ENCODE measurements at regions of chr7 and their contacts with region 1.

Region 1: DNA sequence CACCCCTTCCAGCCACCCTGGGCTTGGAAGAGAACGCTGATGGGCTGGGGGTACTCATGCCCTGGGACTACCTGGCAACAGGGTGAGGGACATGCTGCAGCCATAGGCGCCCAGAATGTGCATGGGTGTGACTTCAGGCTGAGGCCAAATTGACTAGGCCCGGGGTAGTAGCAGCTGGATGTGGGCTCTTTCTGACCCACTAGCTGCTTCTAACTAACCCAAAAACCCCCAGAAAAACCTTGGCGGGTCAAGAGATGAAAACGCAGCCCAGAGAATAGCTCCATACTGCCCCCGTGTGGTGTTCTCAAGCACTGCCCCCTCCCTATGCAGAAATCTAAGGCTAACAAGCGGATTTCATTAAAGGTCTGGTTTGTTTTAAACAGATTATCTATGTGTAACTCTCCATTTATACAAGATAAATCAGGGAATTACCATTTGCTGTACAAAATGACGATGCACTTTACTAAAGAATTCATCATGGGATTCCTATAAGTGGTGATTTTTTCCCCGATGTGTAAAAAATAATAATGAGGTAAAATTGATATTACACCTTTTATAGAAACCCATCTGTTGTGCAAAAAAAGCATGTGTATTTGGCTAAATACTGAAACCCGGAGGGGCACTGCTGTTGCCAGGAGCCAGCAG is 4.2 kb downstream of the SMARCD3 start:
- DNase-seq: peak; percentile 72
- H3K4me3 Mint-ChIP-seq: no peak overlapping the region
- H3K27ac Mint-ChIP-seq: no peak overlapping the region
- H3K4me1 Mint-ChIP-seq: peaks cover 34% of the 10 kb centered on the region
- H3K27me3 Mint-ChIP-seq: peaks cover 39% of the 10 kb centered on the region

Region 2: DNA sequence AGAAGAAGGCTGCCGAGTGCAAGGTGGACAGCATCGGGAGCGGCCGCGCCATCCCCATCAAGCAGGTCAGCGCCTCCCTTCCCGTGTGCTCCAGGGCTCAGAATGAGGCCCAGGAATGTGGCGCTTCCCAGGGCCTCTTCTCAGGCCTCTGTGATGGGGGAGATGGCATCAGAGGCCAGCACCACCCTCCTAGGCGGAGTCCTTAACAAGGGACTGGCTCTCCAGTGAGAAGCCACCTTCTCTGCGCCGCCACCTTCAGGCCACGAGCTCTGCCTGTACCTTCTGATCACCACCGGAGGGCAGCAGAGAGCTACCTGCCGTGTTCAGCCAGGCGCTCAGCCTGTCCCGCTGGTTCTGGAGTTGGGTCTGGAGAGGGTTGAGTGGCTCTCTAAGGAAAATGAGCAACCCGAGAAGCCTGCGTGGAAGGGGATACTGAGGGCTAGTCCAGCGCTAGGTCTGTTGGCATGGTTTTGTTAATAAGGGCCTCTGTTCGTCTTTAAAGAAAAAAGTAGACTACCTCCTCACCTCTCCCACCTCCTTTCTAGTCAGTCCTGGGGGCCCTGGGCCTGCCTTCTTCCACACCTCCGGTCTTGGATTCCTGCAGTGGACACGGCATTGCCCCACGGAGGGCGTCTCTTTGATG is 120.4 kb before region 1 on chr7:
- CTCF ChIA-PET with region 1: interaction called, 29 read pairs
- POLR2A ChIA-PET with region 1: interaction called, 4 read pairs
- DNase-seq: peak; percentile 84
- H3K4me3 Mint-ChIP-seq: no peak overlapping the region
- H3K27ac Mint-ChIP-seq: no peak overlapping the region
- H3K4me1 Mint-ChIP-seq: peaks cover 3% of the 10 kb centered on the region
- H3K27me3 Mint-ChIP-seq: no peaks in the 10 kb centered on the region

Region 3: DNA sequence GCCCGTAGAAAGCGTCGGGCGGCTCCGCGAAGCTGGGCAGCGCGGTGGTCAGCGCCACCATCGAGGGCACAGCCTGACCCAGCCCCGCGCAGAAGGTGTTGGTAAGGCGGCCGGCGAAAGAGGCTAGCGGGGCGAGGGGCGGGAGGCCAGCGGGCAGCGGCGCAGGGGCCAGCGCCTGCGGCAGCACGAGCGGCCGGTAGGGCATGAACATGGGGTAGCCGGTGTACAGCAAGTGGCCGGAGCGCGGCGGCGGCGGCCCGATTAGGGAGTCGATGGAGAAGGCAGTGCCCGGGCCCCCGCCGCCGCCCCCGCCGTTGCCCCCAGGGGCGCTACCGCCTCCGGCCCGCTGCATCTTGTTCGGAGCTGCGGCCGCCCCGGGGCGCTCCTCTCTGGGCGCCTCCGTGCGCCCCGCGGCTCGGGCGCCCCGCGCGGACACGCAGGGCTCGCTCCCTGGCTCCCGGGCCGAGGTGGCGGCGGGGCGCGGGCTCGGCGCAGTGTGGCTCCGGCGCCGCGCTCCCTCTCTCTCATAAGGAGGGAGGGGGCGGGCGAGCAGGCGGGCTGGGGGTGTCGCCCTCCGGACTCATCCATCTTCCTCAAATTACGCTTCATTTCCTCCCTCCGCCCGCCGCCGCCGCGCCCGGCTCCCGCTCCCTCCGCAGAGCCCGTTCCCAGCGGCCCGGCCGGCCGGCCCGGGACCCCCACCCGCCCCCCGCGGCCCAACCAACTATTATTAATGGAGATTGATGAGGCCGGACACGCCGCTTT is 76.9 kb before region 1 on chr7 and contains the start of gene GBX1:
- CTCF ChIA-PET with region 1: interaction called, 11 read pairs
- POLR2A ChIA-PET with region 1: no interaction called
- DNase-seq: no peak
- H3K4me3 Mint-ChIP-seq: peak within 1 kb of the TSS; percentile 53
- H3K27ac Mint-ChIP-seq: no peak within 1 kb of the TSS
- H3K4me1 Mint-ChIP-seq: peaks cover 7% of the 10 kb centered on the region
- H3K27me3 Mint-ChIP-seq: peaks cover 36% of the 10 kb centered on the region
- total RNA-seq, gene GBX1: not detected

Region 4: DNA sequence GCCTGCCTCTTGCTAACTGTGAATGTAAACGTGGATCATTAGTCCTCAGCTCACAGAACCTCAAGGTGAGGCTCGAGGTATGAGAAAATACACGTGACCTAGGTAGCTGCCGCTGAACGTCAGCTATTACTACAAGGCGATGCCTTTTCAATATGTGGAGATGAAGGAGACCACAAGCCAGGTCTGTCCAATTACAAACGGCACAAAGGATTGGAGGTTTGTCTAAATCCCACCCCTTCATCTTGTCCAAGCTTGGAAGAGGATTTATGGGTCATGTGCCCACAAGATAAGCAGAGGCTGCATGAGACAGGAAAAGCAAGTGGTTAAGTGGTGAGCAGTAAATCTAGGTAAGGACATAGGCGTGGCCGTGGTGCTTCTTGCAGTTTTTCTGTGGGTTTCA is 37.4 kb before region 1 on chr7:
- CTCF ChIA-PET with region 1: interaction called, 22 read pairs
- POLR2A ChIA-PET with region 1: interaction called, 3 read pairs
- DNase-seq: peak; percentile 52
- H3K4me3 Mint-ChIP-seq: no peak overlapping the region
- H3K27ac Mint-ChIP-seq: peak overlapping the region; percentile 74
- H3K4me1 Mint-ChIP-seq: peaks cover 27% of the 10 kb centered on the region
- H3K27me3 Mint-ChIP-seq: peaks cover 4% of the 10 kb centered on the region

Region 5: DNA sequence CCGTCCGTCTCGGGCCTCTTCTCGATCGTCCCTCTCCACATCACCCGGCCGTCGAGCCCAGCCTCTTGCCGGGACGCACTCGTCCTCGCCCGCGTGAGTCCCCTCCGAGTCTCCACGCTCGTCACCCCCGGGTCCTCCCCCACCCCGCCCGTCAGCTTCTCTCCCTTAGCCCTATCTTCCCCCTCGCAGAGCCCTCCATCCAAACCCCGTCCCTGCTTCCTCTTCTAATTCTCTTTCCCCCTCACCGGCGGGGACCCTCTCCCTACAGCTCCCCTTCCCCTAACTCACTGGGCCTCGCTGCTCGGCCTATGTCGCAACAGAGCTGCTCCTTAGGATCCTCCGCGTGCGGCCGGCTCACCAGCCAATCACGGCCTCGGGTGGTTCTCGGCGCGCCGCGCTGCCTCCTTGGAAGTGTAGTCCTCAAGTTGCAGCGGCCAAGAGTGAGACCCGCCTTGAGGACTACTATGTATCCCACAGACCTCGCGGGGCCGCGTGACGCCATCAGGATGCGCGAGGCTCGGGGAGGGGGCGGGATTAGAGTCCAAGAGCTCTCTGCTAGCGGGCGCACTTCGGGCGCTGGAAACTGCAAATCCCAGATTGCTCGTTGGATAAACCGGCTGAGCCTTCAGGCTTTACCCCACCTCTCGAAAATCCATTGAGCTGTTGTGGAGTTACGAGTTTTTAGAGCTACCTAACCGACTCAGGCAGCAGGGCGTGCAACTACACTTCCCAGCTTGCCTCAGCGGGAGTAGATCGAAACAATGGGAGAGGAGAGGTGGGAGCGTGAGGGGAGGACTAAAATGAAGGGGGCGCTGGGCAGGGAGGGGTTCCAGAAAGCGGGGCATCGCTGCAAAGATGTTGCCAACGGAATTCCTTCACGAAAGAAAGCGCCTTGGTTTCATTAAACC is 17.2 kb before region 1 on chr7 and contains the start of gene ABCF2:
- CTCF ChIA-PET with region 1: interaction called, 47 read pairs
- POLR2A ChIA-PET with region 1: interaction called, 38 read pairs
- DNase-seq: peak; percentile 99
- H3K4me3 Mint-ChIP-seq: peak within 1 kb of the TSS; percentile 98
- H3K27ac Mint-ChIP-seq: peak within 1 kb of the TSS; percentile 83
- H3K4me1 Mint-ChIP-seq: peaks cover 46% of the 10 kb centered on the region
- H3K27me3 Mint-ChIP-seq: no peaks in the 10 kb centered on the region
- total RNA-seq, gene ABCF2: 23.1 to 27.6 TPM

Region 6: GRCh38 chr7:151232091-151232916 is 12.0 kb before region 1 on chr7 and contains the start of gene CHPF2:
- CTCF ChIA-PET with region 1: interaction called, 47 read pairs
- POLR2A ChIA-PET with region 1: interaction called, 38 read pairs
- DNase-seq: peak; percentile 95
- H3K4me3 Mint-ChIP-seq: peak within 1 kb of the TSS; percentile 99
- H3K27ac Mint-ChIP-seq: peak within 1 kb of the TSS; percentile 99
- H3K4me1 Mint-ChIP-seq: peaks cover 47% of the 10 kb centered on the region
- H3K27me3 Mint-ChIP-seq: no peaks in the 10 kb centered on the region
- total RNA-seq, gene CHPF2: 56.0 to 56.4 TPM

Region 7: GRCh38 chr7:151336027-151336708 is 91.8 kb after region 1 on chr7:
- CTCF ChIA-PET with region 1: no interaction called
- POLR2A ChIA-PET with region 1: no interaction called
- DNase-seq: no peak
- H3K4me3 Mint-ChIP-seq: no peak overlapping the region
- H3K27ac Mint-ChIP-seq: no peak overlapping the region
- H3K4me1 Mint-ChIP-seq: peaks cover 24% of the 10 kb centered on the region
- H3K27me3 Mint-ChIP-seq: peaks cover 3% of the 10 kb centered on the region

Measured in activated CD4-positive, alpha-beta memory T cell treated with anti-CD3 and anti-CD28 coated beads, Interleukin-2, amount 10 ng/mL, durations not matched to agents 7 days and 5 days (primary cell).